ENCODE measurements at regions of chr15 and their contacts with region 1.

Region 1: DNA sequence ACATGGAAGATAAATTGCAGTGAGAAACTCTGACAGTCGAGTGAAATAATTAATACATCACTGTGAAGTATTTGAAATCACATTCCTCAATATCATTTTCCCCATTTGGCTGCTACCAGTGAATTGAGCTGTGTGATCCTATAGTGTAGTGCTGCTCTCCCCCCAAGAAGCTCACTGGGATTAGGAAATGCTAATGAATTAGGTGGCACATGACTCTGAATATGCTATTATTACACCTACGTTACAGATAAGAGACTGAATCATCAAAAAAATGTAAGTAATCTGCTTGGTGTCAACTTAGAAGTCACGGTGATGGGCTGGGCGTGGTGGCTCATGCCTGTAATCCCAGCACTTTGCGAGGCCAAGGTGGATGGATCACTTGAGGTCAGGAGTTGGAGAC is 34.7 kb upstream of the SYNM start:
- DNase-seq: no peak
- ATAC-seq: no peak
- H3K4me3 ChIP-seq: no peak overlapping the region
- H3K27ac ChIP-seq: no peak overlapping the region
- H3K4me1 ChIP-seq: peaks cover 7% of the 10 kb centered on the region
- H3K27me3 ChIP-seq: no peaks in the 10 kb centered on the region
- CTCF ChIP-seq: no peak
- EP300 ChIP-seq: no peak
- POLR2A ChIP-seq: no peak
- RAD21 ChIP-seq: no peak

Region 2: DNA sequence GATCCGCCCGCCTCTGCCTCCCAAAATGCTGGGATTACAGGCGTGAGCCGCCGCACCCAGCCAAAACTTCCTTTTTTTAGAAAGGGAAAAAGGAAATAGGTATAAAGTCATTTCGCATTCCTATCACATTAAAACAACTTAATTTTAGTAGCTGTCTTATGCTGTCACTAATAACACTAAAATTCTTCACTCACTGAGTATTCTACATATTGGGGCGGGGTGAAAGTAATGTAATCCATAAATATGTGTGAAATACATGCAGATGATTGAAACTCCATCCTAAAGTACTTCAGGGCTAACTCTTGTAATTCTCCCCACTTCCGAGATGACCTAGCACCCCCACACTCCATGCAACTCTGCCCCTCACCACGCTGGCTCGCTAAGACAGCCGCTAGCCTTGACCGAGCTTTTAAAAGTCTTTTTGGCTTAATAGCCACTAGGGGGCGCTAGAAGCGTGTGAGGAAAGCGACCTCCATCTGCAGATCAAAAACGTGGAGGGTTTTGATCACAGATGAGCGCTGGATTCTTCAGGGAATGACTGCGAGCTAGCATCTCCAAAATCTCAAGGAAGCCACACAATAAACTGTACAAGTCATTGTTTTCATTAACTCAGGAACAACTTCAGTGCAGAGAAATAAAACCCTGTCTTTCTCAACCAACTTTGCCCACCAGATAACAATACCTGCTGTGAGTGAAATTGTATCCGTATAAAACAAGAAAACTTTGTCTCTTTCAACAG is 551.2 kb before region 1 on chr15:
- CTCF ChIA-PET with region 1: interaction called, 55 read pairs
- POLR2A ChIA-PET with region 1: no interaction called
- RAD21 ChIA-PET with region 1: interaction called, 18 read pairs
- SMC1A ChIA-PET with region 1: interaction called, 32 read pairs
- in situ Hi-C with region 1: loop called (anchors 5 kb)
- intact Hi-C with region 1: no loop called
- DNase-seq: no peak
- ATAC-seq: peak; percentile 95
- H3K4me3 ChIP-seq: no peak overlapping the region
- H3K27ac ChIP-seq: no peak overlapping the region
- H3K4me1 ChIP-seq: no peaks in the 10 kb centered on the region
- H3K27me3 ChIP-seq: no peaks in the 10 kb centered on the region
- CTCF ChIP-seq: peak; percentile 64 to 75 (median 68)
- EP300 ChIP-seq: no peak
- POLR2A ChIP-seq: no peak
- RAD21 ChIP-seq: peak; percentile 75

Measured in GM12878 (cell line).